ENCODE measurements at regions of chr3 and their contacts with region 1.

Region 1: DNA sequence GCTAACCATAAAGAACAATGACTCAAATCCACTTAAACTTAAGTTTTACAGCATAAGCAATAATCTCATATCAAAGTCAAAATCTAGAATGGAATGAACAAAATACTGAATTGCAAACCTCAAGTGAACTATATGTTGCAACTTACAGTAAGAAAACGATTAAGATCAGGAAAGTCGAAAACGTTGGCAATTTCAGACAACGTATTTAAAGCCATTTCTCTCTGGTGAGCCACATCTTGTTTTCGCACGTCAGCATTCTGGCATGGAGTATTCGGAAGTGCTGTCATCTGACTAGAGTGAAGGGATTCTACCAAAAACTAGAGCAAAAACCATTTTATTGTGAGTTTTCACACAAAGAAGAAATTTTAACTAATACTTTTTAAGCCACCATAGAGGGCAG is 28.5 kb downstream of the ATR start:
- DNase-seq: no peak
- ATAC-seq: no peak
- H3K4me3 ChIP-seq: no peak overlapping the region
- H3K27ac ChIP-seq: no peak overlapping the region
- H3K4me1 ChIP-seq: no peaks in the 10 kb centered on the region
- H3K27me3 ChIP-seq: no peaks in the 10 kb centered on the region
- CTCF ChIP-seq: no peak
- EP300 ChIP-seq: no peak
- POLR2A ChIP-seq: no peak
- RAD21 ChIP-seq: no peak

Region 2: GRCh38 chr3:142568393-142569017 is 18.5 kb after region 1 on chr3:
- CTCF ChIA-PET with region 1: no interaction called
- POLR2A ChIA-PET with region 1: no interaction called
- in situ Hi-C with region 1: no loop called
- intact Hi-C with region 1: loop called (anchors 1 kb)
- DNase-seq: no peak
- ATAC-seq: peak; percentile 53
- H3K4me3 ChIP-seq: no peak overlapping the region
- H3K27ac ChIP-seq: no peak overlapping the region
- H3K4me1 ChIP-seq: peaks cover 12% of the 10 kb centered on the region
- H3K27me3 ChIP-seq: no peaks in the 10 kb centered on the region
- CTCF ChIP-seq: no peak
- EP300 ChIP-seq: no peak
- POLR2A ChIP-seq: no peak
- RAD21 ChIP-seq: no peak

Region 3: DNA sequence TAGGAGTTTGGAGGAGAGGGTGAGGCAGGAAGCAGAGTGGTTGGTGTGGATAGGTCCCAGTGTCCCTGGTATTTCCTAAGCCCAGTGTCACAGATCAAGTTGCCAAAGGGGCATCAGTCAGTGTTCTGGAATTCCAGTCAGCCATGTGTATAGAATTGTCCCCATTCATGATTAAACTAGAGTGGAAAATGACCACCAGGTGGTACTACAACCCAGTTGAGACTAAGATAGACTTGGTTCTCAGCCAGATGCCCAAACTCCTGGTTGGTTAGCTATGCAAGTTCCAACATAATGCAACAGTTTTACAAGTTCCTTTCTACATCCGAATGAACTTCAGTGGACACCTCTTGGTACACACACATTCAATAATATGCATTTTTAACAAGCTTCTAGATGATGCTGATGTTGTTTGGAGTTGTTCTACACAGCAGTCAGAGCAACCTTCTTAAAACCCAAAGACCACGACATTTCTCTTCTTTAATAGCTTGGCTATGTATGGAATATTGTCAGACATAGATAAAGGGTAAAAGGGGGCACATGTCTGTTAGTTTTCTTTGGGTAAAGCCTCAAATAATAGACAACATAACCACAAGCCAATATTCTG is 36.9 kb after region 1 on chr3:
- CTCF ChIA-PET with region 1: no interaction called
- POLR2A ChIA-PET with region 1: no interaction called
- in situ Hi-C with region 1: no loop called
- intact Hi-C with region 1: no loop called
- DNase-seq: peak; percentile 85
- ATAC-seq: peak; percentile 96
- H3K4me3 ChIP-seq: no peak overlapping the region
- H3K27ac ChIP-seq: no peak overlapping the region
- H3K4me1 ChIP-seq: peaks cover 1% of the 10 kb centered on the region
- H3K27me3 ChIP-seq: no peaks in the 10 kb centered on the region; a peak in 2 of 5 replicates
- CTCF ChIP-seq: peak; percentile 87
- EP300 ChIP-seq: no peak
- POLR2A ChIP-seq: no peak
- RAD21 ChIP-seq: peak; percentile 83

Measured in HepG2 (cell line).